ENCODE measurements at regions of chr5 and their contacts with region 1.

Region 1: GRCh38 chr5:128201065-128201926 is 117.7 kb downstream of the SLC12A2 start:
- DNase-seq: peak; percentile 64 to 97 (median 86)

Region 2: GRCh38 chr5:127564002-127564769 is 637.1 kb before region 1 on chr5:
- intact Hi-C with region 1: loop called (anchors 5 kb)
- DNase-seq: peak in 2 of 10 donors; percentile 37 to 43

Region 3: GRCh38 chr5:127757576-127757975 is 443.7 kb before region 1 on chr5:
- intact Hi-C with region 1: loop called (anchors 2 kb)
- DNase-seq: peak in 5 of 10 donors; percentile 10 to 79 (median 26)

Region 4: DNA sequence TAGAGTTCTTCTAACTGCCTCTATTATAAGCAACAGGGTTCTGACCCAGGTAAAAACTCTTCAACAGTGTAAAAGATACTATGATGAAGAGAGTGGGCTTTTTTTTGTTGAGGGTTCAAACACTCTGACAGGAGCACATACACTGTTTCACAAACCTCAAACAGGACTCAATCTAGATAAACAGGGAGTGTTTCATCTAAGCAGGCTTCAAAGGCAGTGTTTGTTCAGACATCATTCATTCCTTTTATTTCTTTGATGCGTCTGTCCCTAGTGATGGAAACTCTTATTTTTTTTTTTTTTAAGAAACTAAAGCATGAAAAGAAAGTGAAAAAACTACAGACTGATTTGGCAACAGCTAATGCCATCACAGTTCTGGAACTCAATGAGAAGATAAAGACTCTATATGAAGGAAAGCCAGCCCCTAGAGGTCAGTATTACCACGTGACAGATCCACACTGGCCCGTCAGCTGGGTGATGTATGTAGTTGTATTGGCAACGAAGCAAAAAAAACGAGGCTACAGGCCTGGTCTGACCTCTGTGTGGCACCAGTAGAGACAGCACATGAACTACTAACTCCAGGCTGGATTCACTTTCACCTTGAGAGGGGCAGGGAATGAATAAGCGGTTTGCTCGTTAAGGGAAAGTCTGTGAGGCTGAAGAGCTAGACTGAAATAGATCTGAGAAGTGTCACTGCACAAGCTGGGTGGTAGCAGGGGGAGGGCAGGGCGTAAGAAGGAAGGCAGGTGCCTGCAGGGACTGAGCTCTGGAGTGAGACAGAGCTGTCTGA is 325.9 kb before region 1 on chr5:
- intact Hi-C with region 1: loop called (anchors 1 kb)
- DNase-seq: peak in 7 of 10 donors; percentile 19 to 90 (median 54)

Measured in posterior cingulate gyrus (tissue), 11 donors.